B cell (primary cell): ENCODE measurements at regions of chr4 and their contacts with region 1.

Region 1: DNA sequence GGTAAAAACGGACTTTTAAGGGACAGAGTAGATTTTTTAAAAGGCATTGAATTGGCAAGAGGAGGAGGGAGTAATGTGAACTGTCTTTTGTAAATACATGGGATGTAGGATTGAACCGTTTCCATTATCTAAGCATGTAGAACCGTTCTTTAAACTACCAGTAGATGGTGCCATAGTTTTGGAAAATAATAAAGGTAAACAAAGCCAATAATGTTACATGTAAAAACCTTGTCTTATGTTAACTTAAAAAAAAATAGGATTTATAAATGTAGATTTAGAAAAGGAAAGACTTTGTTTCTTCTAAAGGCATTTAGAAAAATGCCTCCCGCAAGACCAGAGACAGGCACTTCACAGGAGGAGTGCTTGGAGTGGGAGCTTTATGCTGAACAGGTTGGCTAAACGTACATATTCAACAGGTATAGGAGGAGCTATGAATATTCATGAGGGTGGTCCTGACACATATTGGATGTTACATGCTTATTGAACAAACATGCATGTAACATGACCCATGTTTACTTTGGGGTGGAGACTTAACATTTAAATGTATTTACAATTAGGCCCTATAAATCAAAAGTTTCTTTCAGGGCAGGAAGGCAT is 45.5 kb upstream of the FAM241A start:
- DNase-seq: peak; percentile 57
- ATAC-seq: peak; percentile 36
- H3K4me3 ChIP-seq: no peak overlapping the region
- H3K4me3 Mint-ChIP-seq: no peak overlapping the region
- H3K27ac ChIP-seq: no peak overlapping the region
- H3K27ac Mint-ChIP-seq: no peak overlapping the region
- H3K4me1 ChIP-seq: no peaks in the 10 kb centered on the region
- H3K4me1 Mint-ChIP-seq: no peaks in the 10 kb centered on the region
- H3K27me3 ChIP-seq: peaks cover 0 to 4% (median 0%) of the 10 kb centered on the region in 4 experiments
- H3K27me3 Mint-ChIP-seq: no peaks in the 10 kb centered on the region
- CTCF ChIP-seq: peak; percentile 78

Region 2: DNA sequence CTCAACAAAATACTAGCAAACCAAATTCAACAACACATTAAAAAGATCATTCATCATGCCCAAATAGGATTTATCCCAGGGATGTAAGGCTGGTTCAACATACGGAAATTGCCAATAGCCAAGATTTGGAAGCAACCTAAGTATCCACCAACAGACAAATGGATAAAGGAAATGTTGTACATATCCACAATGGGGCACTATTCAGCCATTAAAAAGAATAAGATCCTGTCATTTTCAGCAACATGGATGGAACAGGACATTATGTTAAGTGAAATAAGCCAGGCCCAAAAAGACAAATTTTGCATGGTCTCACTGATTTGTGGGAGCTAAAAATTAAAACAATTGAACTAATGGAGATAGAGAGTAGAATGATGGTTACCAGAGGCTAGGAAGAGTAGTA is 36.5 kb before region 1 on chr4:
- CTCF ChIA-PET with region 1: no interaction called
- POLR2A ChIA-PET with region 1: no interaction called
- intact Hi-C with region 1: no loop called
- DNase-seq: no peak
- ATAC-seq: no peak
- H3K4me3 ChIP-seq: no peak overlapping the region
- H3K4me3 Mint-ChIP-seq: no peak overlapping the region
- H3K27ac ChIP-seq: no peak overlapping the region
- H3K27ac Mint-ChIP-seq: no peak overlapping the region
- H3K4me1 ChIP-seq: no peaks in the 10 kb centered on the region
- H3K4me1 Mint-ChIP-seq: no peaks in the 10 kb centered on the region
- H3K27me3 ChIP-seq: peaks cover 0 to 4% (median 0%) of the 10 kb centered on the region in 4 experiments
- H3K27me3 Mint-ChIP-seq: peaks cover 27% of the 10 kb centered on the region
- CTCF ChIP-seq: no peak

Region 3: DNA sequence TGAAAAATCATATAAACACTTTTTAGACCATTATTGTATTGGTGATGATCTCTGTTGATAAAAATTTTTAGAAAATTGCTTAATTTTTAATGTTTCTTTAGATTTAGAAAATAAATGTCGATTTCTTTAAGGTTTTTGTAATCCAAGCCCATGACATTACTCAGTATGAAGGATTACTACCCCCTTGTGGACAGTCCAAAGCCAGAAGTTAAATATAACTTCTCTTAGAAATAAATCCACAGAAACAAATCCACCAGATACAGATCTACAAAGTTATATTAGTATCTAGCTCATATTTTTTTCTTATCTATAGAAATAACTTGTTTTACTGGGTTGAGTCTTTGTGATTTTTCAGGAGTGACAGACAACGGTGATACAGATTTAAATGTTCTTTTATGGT is 167.0 kb after region 1 on chr4:
- CTCF ChIA-PET with region 1: interaction called, 28 read pairs
- POLR2A ChIA-PET with region 1: no interaction called
- intact Hi-C with region 1: no loop called
- DNase-seq: peak; percentile 23
- ATAC-seq: no peak
- H3K4me3 ChIP-seq: no peak overlapping the region
- H3K4me3 Mint-ChIP-seq: no peak overlapping the region
- H3K27ac ChIP-seq: no peak overlapping the region
- H3K27ac Mint-ChIP-seq: no peak overlapping the region
- H3K4me1 ChIP-seq: no peaks in the 10 kb centered on the region
- H3K4me1 Mint-ChIP-seq: no peaks in the 10 kb centered on the region
- H3K27me3 ChIP-seq: no peaks in the 10 kb centered on the region
- H3K27me3 Mint-ChIP-seq: no peaks in the 10 kb centered on the region
- CTCF ChIP-seq: peak; percentile 62

Region 4: GRCh38 chr4:112321776-112322684 is 222.2 kb after region 1 on chr4:
- CTCF ChIA-PET with region 1: interaction called, 6 read pairs
- POLR2A ChIA-PET with region 1: no interaction called
- intact Hi-C with region 1: loop called (anchors 5 kb)
- DNase-seq: peak; percentile 83
- ATAC-seq: peak; percentile 73
- H3K4me3 ChIP-seq: peak overlapping the region in 1 of 5 experiments; percentile 44
- H3K4me3 Mint-ChIP-seq: no peak overlapping the region
- H3K27ac ChIP-seq: no peak overlapping the region
- H3K27ac Mint-ChIP-seq: no peak overlapping the region
- H3K4me1 ChIP-seq: peaks cover 0 to 8% of the 10 kb centered on the region in 2 donors
- H3K4me1 Mint-ChIP-seq: peaks cover 12% of the 10 kb centered on the region
- H3K27me3 ChIP-seq: no peaks in the 10 kb centered on the region
- H3K27me3 Mint-ChIP-seq: no peaks in the 10 kb centered on the region
- CTCF ChIP-seq: peak; percentile 99